CD4-positive, alpha-beta memory T cell (primary cell): ENCODE measurements at regions of chr20 and their contacts with region 1.

Region 1: GRCh38 chr20:13546497-13547131 is 92.1 kb downstream of the TASP1 start:
- DNase-seq: peak in 4 of 5 donors; percentile 32 to 45 (median 39)
- H3K4me3 ChIP-seq: no peak overlapping the region
- H3K4me3 Mint-ChIP-seq: no peak overlapping the region
- H3K27ac ChIP-seq: no peak overlapping the region
- H3K27ac Mint-ChIP-seq: peak overlapping the region in 1 of 7 donors; percentile 3
- H3K4me1 ChIP-seq: no peaks in the 10 kb centered on the region
- H3K4me1 Mint-ChIP-seq: peaks cover 0 to 2% (median 0%) of the 10 kb centered on the region in 4 donors
- H3K27me3 ChIP-seq: no peaks in the 10 kb centered on the region
- H3K27me3 Mint-ChIP-seq: no peaks in the 10 kb centered on the region

Region 2: DNA sequence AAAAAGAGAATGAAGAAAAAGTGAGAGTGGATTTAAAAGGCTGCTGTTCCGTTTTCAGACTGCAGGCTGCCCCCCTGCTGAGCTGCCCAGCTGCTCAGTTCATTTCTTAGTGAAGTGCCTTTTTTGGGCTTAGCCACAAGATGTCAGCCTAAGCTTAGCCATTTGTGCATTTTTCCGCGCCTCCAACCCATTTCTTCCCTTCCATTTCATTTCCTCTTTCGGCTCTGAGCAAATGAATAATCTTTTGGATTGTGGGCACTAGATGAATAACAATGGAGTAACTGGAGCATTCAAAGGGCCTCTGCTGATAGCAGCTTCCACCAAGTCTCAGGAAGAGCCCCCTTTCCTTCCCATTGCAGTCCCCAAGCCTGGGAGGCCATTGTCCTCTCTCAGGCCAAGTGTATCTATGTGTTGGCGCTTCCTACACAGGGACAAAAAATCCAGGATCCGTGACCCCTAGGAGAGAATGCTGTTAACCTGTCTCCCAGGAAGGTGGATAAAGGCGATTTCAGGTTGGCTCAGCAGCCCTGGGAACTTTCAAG is 621.3 kb before region 1 on chr20:
- CTCF ChIA-PET with region 1: no interaction called
- POLR2A ChIA-PET with region 1: no interaction called
- intact Hi-C with region 1: loop called (anchors 5 kb)
- DNase-seq: peak in 3 of 5 donors; percentile 2 to 42 (median 11)
- H3K4me3 ChIP-seq: no peak overlapping the region
- H3K4me3 Mint-ChIP-seq: no peak overlapping the region
- H3K27ac ChIP-seq: no peak overlapping the region
- H3K27ac Mint-ChIP-seq: no peak overlapping the region
- H3K4me1 ChIP-seq: no peaks in the 10 kb centered on the region
- H3K4me1 Mint-ChIP-seq: peaks cover 0 to 3% (median 0%) of the 10 kb centered on the region in 4 donors
- H3K27me3 ChIP-seq: no peaks in the 10 kb centered on the region
- H3K27me3 Mint-ChIP-seq: peaks cover 0 to 2% of the 10 kb centered on the region in 2 donors

Region 3: DNA sequence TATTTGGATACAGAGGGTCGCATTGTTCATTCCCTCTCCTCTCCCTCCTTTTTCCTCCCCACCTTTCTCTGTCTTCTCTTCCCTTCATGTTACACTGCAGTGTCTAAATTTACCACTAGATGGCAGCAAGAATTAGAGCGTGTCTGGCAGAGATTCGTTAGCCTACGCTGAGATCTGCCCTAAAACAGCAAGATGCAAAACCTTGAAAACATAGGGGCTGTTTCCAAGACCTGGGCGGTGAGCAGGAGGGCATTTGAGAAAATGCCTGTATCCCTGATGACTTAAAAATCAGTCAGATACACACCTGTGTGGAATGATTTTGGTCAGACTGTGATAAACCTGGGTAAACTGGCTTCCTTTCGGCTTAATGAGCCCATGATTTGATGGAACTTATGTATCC is 427.0 kb before region 1 on chr20:
- CTCF ChIA-PET with region 1: interaction called, 46 read pairs
- POLR2A ChIA-PET with region 1: no interaction called
- intact Hi-C with region 1: loop called (anchors 1 kb)
- DNase-seq: peak; percentile 38 to 65 (median 63)
- H3K4me3 ChIP-seq: no peak overlapping the region
- H3K4me3 Mint-ChIP-seq: no peak overlapping the region
- H3K27ac ChIP-seq: no peak overlapping the region
- H3K27ac Mint-ChIP-seq: peak overlapping the region in 1 of 7 donors; percentile 7
- H3K4me1 ChIP-seq: no peaks in the 10 kb centered on the region
- H3K4me1 Mint-ChIP-seq: peaks cover 0 to 2% (median 0%) of the 10 kb centered on the region in 4 donors
- H3K27me3 ChIP-seq: no peaks in the 10 kb centered on the region
- H3K27me3 Mint-ChIP-seq: peaks cover 0 to 2% of the 10 kb centered on the region in 2 donors

Region 4: GRCh38 chr20:13464702-13465101 is 81.9 kb before region 1 on chr20:
- CTCF ChIA-PET with region 1: interaction called, 4 read pairs
- POLR2A ChIA-PET with region 1: no interaction called
- intact Hi-C with region 1: loop called (anchors 5 kb)
- DNase-seq: no peak
- H3K4me3 ChIP-seq: no peak overlapping the region
- H3K4me3 Mint-ChIP-seq: no peak overlapping the region
- H3K27ac ChIP-seq: no peak overlapping the region
- H3K27ac Mint-ChIP-seq: no peak overlapping the region
- H3K4me1 ChIP-seq: no peaks in the 10 kb centered on the region
- H3K4me1 Mint-ChIP-seq: peaks cover 0 to 2% (median under 1%) of the 10 kb centered on the region in 4 donors
- H3K27me3 ChIP-seq: no peaks in the 10 kb centered on the region
- H3K27me3 Mint-ChIP-seq: no peaks in the 10 kb centered on the region

Region 5: GRCh38 chr20:13567663-13568062 is 21.0 kb after region 1 on chr20:
- CTCF ChIA-PET with region 1: interaction called, 13 read pairs
- POLR2A ChIA-PET with region 1: no interaction called
- intact Hi-C with region 1: no loop called
- DNase-seq: no peak
- H3K4me3 ChIP-seq: no peak overlapping the region
- H3K4me3 Mint-ChIP-seq: no peak overlapping the region
- H3K27ac ChIP-seq: no peak overlapping the region
- H3K27ac Mint-ChIP-seq: no peak overlapping the region
- H3K4me1 ChIP-seq: no peaks in the 10 kb centered on the region
- H3K4me1 Mint-ChIP-seq: peaks cover 0 to 3% (median under 1%) of the 10 kb centered on the region in 4 donors
- H3K27me3 ChIP-seq: no peaks in the 10 kb centered on the region
- H3K27me3 Mint-ChIP-seq: no peaks in the 10 kb centered on the region